Activated CD8-positive, alpha-beta T cell treated with anti-CD3 and anti-CD28 coated beads for 36 hours (primary cell): ENCODE measurements at regions of chr6 and their contacts with region 1.

Region 1: GRCh38 chr6:161694995-161695394 is 421.1 kb upstream of the AGPAT4 start:
- DNase-seq: no peak
- ATAC-seq: peak; percentile 45
- H3K4me3 Mint-ChIP-seq: no peak overlapping the region
- H3K27ac Mint-ChIP-seq: no peak overlapping the region
- H3K4me1 Mint-ChIP-seq: no peaks in the 10 kb centered on the region
- H3K27me3 Mint-ChIP-seq: no peaks in the 10 kb centered on the region
- CTCF ChIP-seq: peak; percentile 42

Region 2: GRCh38 chr6:161393839-161394364 is 301.1 kb before region 1 on chr6:
- CTCF ChIA-PET with region 1: interaction called, 7 read pairs
- POLR2A ChIA-PET with region 1: no interaction called
- intact Hi-C with region 1: loop called (anchors 10 kb)
- DNase-seq: peak; percentile 81
- ATAC-seq: peak; percentile 98
- H3K4me3 Mint-ChIP-seq: no peak overlapping the region
- H3K27ac Mint-ChIP-seq: no peak overlapping the region
- H3K4me1 Mint-ChIP-seq: peaks cover 2% of the 10 kb centered on the region
- H3K27me3 Mint-ChIP-seq: no peaks in the 10 kb centered on the region
- CTCF ChIP-seq: peak; percentile 73